ENCODE measurements at regions of chr11 and their contacts with region 1.

Region 1: DNA sequence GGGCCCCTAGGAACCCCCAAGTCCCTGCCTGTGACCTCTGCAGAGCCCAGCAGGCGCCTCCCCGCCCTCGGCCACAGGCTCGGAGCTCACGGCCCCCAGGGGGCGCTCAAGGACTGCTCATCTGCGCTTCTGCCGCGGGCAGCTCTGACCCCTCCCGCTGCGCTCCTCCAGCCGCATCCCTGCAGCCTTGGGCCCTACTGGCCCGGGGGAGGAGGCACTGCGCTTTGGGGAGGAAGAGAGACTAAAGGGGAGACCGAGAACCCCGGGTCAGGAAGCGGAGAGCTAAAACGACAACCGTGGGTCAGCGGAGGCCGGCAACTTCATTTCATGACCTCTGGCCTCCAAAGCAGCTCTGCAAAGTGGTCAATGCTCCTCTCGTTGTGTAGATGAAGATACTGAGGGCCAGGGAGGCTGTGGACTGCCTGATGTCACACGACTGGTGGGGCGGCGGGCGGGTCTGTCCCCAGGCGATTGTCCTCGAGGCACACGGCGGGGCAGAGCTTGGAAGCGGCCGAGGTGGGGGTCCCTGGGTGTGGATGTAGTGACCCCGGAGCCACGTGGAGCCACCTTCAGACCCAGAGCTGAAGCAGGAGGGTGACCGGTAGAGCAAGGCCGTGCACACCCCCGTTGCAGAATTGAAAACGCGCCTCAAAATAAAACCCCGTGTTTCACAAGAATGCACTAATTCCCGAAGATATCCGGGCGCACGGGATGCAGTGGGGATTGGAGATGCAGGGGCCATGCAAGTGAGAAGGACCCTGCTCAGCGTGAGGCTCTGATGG is 2.7 kb upstream of the KRTAP5-6 start:
- DNase-seq: peak; percentile 85
- ATAC-seq: peak; percentile 91
- H3K4me3 Mint-ChIP-seq: no peak overlapping the region
- H3K27ac Mint-ChIP-seq: no peak overlapping the region
- H3K4me1 Mint-ChIP-seq: peaks cover 5% of the 10 kb centered on the region
- H3K27me3 Mint-ChIP-seq: peaks cover 14% of the 10 kb centered on the region
- CTCF ChIP-seq: peak; percentile 76

Region 2: DNA sequence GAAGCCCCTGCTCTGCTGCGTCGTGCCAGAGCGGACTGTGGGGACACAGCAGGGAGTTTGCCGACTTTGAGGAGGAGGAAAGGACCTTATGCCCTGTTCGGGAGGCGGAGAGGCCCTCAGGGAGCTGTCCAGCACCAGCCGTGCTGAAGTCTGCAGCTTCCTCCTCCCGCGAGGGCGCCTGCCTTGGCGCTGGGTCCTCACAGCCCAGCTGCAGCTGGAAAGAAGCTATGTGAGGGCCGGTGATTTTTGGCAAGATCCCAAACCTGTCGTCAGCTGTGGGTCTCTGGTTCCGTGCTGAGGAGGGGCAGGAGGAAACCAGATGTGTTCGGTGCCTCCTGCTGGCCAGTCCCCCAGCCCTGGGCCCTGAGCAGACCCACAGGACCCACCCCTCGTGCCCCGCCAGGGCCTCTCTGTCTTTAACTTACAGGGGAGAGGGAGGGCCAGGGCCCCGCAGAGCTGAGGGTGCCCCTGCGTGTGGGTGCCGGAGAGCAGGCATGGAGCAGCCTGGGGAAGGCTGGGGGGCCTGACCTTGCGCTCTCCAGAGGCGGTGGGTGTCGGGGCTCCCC is 292.5 kb before region 1 on chr11:
- CTCF ChIA-PET with region 1: no interaction called
- POLR2A ChIA-PET with region 1: no interaction called
- intact Hi-C with region 1: no loop called
- DNase-seq: peak; percentile 51
- ATAC-seq: peak; percentile 61
- H3K4me3 Mint-ChIP-seq: no peak overlapping the region
- H3K27ac Mint-ChIP-seq: no peak overlapping the region
- H3K4me1 Mint-ChIP-seq: no peaks in the 10 kb centered on the region
- H3K27me3 Mint-ChIP-seq: no peaks in the 10 kb centered on the region
- CTCF ChIP-seq: no peak

Region 3: GRCh38 chr11:1532014-1532586 is 162.2 kb before region 1 on chr11:
- CTCF ChIA-PET with region 1: no interaction called
- POLR2A ChIA-PET with region 1: no interaction called
- intact Hi-C with region 1: no loop called
- DNase-seq: no peak
- ATAC-seq: no peak
- H3K4me3 Mint-ChIP-seq: no peak overlapping the region
- H3K27ac Mint-ChIP-seq: no peak overlapping the region
- H3K4me1 Mint-ChIP-seq: peaks cover 41% of the 10 kb centered on the region
- H3K27me3 Mint-ChIP-seq: no peaks in the 10 kb centered on the region
- CTCF ChIP-seq: no peak

Region 4: GRCh38 chr11:1682225-1682905 is 11.9 kb before region 1 on chr11:
- CTCF ChIA-PET with region 1: interaction called, 66 read pairs
- POLR2A ChIA-PET with region 1: no interaction called
- intact Hi-C with region 1: no loop called
- DNase-seq: no peak
- ATAC-seq: no peak
- H3K4me3 Mint-ChIP-seq: no peak overlapping the region
- H3K27ac Mint-ChIP-seq: no peak overlapping the region
- H3K4me1 Mint-ChIP-seq: no peaks in the 10 kb centered on the region
- H3K27me3 Mint-ChIP-seq: peaks cover 7% of the 10 kb centered on the region
- CTCF ChIP-seq: no peak

Region 5: DNA sequence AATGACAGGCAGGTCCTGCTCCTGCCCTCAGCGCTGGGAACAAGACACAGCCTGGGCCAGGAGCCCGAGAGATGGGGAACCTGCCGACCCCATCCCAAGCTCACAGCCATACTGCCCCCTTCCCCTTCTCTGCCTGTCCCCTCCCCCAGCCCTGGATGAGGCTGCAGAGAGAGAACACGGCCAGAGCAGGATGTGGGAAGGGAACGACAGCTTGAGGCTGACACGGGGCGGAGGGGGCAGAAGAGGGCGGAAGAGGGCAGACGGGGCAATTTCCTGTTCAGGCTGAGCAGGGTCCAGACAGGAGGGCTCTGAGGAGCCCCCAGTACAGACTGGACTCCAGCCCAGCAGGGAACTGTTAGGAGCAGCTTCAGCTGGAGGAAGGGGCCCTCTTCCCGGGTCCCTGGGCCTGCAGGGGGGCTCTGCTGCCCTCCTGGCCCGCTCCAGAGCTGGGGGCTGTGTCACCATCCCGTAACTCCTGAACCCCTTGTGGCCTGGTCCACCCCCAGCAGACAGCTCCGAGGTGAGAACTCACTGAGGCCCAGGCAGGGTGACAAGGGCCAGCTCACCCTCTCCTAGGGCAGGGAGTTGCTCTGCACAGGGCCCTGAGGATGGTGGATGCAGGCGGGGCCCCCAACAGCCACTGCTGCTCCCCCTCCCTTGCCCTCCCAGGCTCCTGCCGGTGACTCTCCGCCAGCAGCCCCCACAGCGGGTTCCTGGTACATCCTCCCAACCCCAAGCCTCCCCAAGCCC is 63.8 kb after region 1 on chr11:
- CTCF ChIA-PET with region 1: interaction called, 18 read pairs
- POLR2A ChIA-PET with region 1: no interaction called
- intact Hi-C with region 1: no loop called
- DNase-seq: peak; percentile 85
- ATAC-seq: peak; percentile 87
- H3K4me3 Mint-ChIP-seq: peak overlapping the region; percentile 62
- H3K27ac Mint-ChIP-seq: peak overlapping the region; percentile 94
- H3K4me1 Mint-ChIP-seq: peaks cover 70% of the 10 kb centered on the region
- H3K27me3 Mint-ChIP-seq: no peaks in the 10 kb centered on the region
- CTCF ChIP-seq: no peak

Region 6: GRCh38 chr11:1807264-1807995 is 113.2 kb after region 1 on chr11:
- CTCF ChIA-PET with region 1: interaction called, 67 read pairs
- POLR2A ChIA-PET with region 1: no interaction called
- intact Hi-C with region 1: no loop called
- DNase-seq: no peak
- ATAC-seq: peak; percentile 51
- H3K4me3 Mint-ChIP-seq: no peak overlapping the region
- H3K27ac Mint-ChIP-seq: no peak overlapping the region
- H3K4me1 Mint-ChIP-seq: no peaks in the 10 kb centered on the region
- H3K27me3 Mint-ChIP-seq: no peaks in the 10 kb centered on the region
- CTCF ChIP-seq: no peak

Region 7: GRCh38 chr11:1832211-1832919 is 138.1 kb after region 1 on chr11:
- CTCF ChIA-PET with region 1: interaction called, 336 read pairs
- POLR2A ChIA-PET with region 1: interaction called, 7 read pairs
- intact Hi-C with region 1: loop called (anchors 2 kb)
- DNase-seq: peak; percentile 70
- ATAC-seq: peak; percentile 79
- H3K4me3 Mint-ChIP-seq: no peak overlapping the region
- H3K27ac Mint-ChIP-seq: no peak overlapping the region
- H3K4me1 Mint-ChIP-seq: no peaks in the 10 kb centered on the region
- H3K27me3 Mint-ChIP-seq: no peaks in the 10 kb centered on the region
- CTCF ChIP-seq: peak; percentile 97

Region 8: DNA sequence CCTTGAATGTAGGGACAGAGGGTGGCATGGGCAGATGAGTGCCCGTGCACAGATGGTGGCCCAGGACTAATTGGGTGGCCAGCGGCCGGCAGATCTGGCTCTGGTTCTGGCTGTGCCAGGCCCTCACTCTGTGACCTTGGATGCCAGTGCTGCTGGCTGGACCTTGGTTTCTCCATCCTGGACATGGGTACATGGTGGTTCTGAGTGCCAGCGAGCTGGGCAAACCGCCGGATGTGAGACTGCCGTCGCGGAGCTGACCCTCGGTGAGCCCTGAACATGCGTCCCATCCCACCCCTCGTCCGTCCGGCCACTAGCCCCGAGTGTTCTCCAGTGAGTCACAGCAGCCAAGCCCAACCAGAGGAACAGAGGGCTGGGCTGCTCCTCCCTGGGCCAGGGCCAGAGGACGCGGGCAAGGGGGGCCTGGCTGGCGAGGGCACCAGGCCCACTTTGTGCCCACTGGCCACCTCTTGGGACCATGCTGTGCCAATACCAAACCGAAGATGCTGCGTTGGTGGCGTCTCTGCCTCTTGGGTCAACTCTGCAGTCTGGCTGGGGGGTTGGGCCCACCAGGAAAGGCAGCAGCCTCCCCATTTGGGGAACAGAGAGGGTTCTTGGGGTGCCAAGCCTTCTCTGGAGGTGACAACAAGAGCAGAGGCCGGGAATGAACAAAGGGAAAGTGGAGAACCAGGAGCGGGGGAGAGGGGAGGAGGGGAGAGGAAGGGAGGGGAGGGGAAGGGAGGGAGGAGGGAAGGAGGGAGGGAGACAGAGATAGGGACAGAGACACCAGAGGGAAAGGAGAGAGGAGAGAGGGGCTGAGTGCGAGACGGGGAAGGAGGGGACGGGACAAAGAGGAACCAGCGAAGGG is 169.3 kb after region 1 on chr11:
- CTCF ChIA-PET with region 1: no interaction called
- POLR2A ChIA-PET with region 1: no interaction called
- intact Hi-C with region 1: no loop called
- DNase-seq: no peak
- ATAC-seq: no peak
- H3K4me3 Mint-ChIP-seq: no peak overlapping the region
- H3K27ac Mint-ChIP-seq: no peak overlapping the region
- H3K4me1 Mint-ChIP-seq: peaks cover 20% of the 10 kb centered on the region
- H3K27me3 Mint-ChIP-seq: no peaks in the 10 kb centered on the region
- CTCF ChIP-seq: no peak

Region 9: GRCh38 chr11:1882519-1883238 is 188.4 kb after region 1 on chr11:
- CTCF ChIA-PET with region 1: interaction called, 11 read pairs
- POLR2A ChIA-PET with region 1: no interaction called
- intact Hi-C with region 1: no loop called
- DNase-seq: peak; percentile 87
- ATAC-seq: peak; percentile 89
- H3K4me3 Mint-ChIP-seq: no peak overlapping the region
- H3K27ac Mint-ChIP-seq: no peak overlapping the region
- H3K4me1 Mint-ChIP-seq: peaks cover 5% of the 10 kb centered on the region
- H3K27me3 Mint-ChIP-seq: no peaks in the 10 kb centered on the region
- CTCF ChIP-seq: peak; percentile 78

Measured in activated CD8-positive, alpha-beta T cell treated with anti-CD3 and anti-CD28 coated beads for 36 hours (primary cell).